HEK293 (cell line): ENCODE measurements at regions of chr10 and their contacts with region 1.

Region 1: DNA sequence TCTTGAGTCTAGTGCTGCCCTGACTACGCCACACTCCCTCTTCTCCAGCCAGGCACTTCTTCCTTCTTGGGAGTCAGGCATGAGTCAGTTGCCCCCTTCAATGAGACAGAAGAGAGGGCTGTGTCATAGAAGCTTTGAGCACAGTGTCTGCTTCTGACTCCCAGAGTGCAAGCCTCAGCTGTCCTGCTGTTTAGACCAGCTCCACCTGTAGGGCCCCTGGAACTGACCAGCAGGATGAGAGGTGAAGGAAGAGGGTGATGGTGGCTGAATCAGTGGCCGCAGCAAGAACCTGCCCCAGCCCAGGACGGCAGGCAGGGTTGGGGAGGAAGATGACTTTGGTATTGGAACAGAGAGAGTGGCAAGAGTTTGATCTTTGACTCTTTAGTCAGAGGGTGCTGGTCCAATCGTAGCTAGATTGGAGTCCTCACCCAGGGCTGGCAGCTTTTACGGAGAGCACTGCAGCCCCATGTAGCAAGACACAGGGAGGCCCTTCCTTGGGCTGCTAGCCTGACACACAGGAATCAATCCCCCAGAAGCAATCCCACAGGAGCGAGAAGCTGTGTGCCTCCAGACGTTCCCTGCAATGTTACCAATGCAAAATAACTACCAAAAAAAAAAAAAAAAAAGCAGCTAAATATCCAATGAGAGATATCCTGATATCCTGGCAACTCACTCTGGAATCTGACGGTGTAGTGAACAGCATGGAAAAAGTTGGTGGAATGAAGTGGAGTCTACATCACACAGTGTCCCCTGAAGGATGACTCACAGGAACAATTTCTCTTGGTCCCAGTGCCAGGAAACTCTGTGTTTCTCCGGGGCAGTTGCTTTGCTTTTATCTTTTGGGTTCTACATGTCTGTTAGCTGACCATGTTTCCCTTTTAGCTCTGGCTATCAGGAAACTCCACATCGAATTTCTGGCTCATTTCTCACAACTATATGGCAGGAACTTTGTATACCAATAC is 6.9 kb downstream of the C10orf62 start:
- H3K4me3 ChIP-seq: no peak overlapping the region
- H3K27ac ChIP-seq: no peak overlapping the region
- H3K4me1 ChIP-seq: no peaks in the 10 kb centered on the region
- CTCF ChIP-seq: no peak

Region 2: DNA sequence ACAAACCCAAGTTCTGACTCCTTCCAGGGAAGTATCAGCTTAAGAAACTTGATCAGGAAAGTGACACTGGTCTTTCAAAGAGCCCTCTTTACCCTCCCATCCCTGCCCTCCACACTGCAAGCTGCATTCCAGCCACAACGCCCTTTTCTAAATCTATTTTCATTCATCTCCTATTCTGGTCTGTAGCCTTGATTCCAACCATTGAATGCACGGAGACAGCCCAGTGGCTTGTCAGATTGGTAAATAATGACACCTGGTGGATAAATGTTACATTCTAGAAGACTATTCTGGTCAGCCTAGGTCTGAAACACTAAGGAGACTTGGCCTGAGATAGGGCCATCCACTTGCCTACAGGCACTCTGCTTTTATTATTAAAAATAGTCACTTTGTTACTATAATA is 16.0 kb after region 1 on chr10:
- CTCF ChIA-PET with region 1: interaction called, 7 read pairs
- POLR2A ChIA-PET with region 1: interaction called, 10 read pairs
- H3K4me3 ChIP-seq: no peak overlapping the region
- H3K27ac ChIP-seq: no peak overlapping the region
- H3K4me1 ChIP-seq: no peaks in the 10 kb centered on the region
- CTCF ChIP-seq: peak; percentile 70; the same call in 1 of the 2 replicates

Region 3: GRCh38 chr10:97780841-97781617 is 184.6 kb after region 1 on chr10:
- CTCF ChIA-PET with region 1: no interaction called
- POLR2A ChIA-PET with region 1: no interaction called
- H3K4me3 ChIP-seq: no peak overlapping the region
- H3K27ac ChIP-seq: no peak overlapping the region; the same call in 1 of the 2 replicates
- H3K4me1 ChIP-seq: peaks cover 10% of the 10 kb centered on the region; the same call in 1 of the 2 replicates
- CTCF ChIP-seq: no peak